Activated T-helper 1 cell treated with anti-CD3 and anti-CD28 coated beads, Interleukin-12 subunit alpha, Interleukin-12 subunit beta, Interleukin-2, Interleukin-4 antibody, amounts not matched to agents 30 ng/mL and 10 ng/mL and 1 ng/mL, durations not matched to agents 14 hours and 24 hours and 36 hours (primary cell): ENCODE measurements at regions of chr6 and their contacts with region 1.

Region 1: GRCh38 chr6:137218917-137219663 is at the start of gene IFNGR1:
- DNase-seq: peak; percentile 94
- H3K4me3 Mint-ChIP-seq: peak within 1 kb of the TSS; percentile 100
- H3K27ac Mint-ChIP-seq: peak within 1 kb of the TSS; percentile 100
- H3K4me1 Mint-ChIP-seq: peaks cover 56% of the 10 kb centered on the region
- H3K27me3 Mint-ChIP-seq: peaks cover 4% of the 10 kb centered on the region
- total RNA-seq, gene IFNGR1: 12.5 and 12.6 TPM in 2 replicates

Region 2: DNA sequence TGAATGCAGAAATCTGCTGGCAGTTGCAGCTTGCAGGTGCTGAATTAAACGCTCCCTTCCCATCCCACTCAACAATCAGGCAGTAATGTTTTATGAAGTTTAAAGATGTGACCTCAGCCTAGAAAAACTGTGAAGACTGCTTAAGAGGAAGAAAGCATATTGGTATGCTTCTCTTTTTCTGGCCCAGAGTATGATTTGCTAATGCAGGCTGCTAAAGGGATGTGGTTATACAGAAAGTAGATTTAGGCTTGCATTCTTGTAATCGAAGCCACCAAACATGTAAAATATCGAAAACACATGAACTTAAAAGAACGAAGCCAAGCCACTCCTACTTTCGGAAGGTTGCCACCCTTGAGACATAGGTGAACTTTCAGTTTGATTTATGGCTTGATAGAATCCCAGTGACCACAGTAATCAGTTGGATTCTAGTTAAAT is 467.6 kb before region 1 on chr6:
- intact Hi-C with region 1: loop called (anchors 5 kb)
- DNase-seq: peak; percentile 45
- H3K4me3 Mint-ChIP-seq: peak overlapping the region; percentile 75
- H3K27ac Mint-ChIP-seq: peak overlapping the region; percentile 87
- H3K4me1 Mint-ChIP-seq: peaks cover 92% of the 10 kb centered on the region
- H3K27me3 Mint-ChIP-seq: no peaks in the 10 kb centered on the region

Region 3: DNA sequence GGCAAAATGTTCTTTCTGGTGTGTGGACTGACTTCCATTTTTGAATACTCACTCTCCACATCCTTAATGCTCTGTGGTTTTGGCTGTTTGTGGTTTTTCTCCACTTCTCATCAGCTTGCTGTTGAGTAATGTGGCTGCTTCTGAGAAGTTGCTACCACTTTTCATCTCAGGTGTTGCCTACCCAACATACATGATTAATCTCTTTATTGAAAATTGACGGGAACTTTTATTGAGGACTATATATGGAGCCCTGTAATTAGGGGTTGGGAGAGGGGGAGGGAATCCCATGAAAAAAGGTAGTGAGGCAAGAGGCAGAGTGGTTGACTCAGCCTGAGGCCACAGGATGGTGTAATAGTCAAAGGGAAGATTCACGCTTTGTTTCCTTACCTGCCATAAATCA is 63.3 kb before region 1 on chr6:
- intact Hi-C with region 1: loop called (anchors 1 kb)
- DNase-seq: peak; percentile 63
- H3K4me3 Mint-ChIP-seq: peak overlapping the region; percentile 30
- H3K27ac Mint-ChIP-seq: peak overlapping the region; percentile 73
- H3K4me1 Mint-ChIP-seq: peaks cover 64% of the 10 kb centered on the region
- H3K27me3 Mint-ChIP-seq: peaks cover 9% of the 10 kb centered on the region

Region 4: DNA sequence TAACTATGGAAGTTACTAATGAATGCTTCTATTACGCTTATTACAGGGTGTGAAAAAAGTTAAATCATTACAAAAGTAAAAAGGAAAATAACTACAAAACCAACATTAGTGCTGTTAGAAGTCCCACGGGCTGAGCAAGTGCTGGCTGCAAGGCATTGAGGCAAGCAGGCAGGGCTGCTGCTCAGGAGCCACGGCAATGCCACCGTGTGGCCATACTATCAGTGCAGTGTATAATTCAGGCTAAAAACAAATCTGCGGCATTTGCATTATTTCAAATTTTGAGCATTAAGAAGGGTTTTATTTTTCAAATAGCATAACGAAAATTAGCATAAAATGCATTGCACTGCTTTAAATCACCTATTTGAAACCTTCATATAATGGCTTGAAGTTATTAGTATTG is 17.0 kb before region 1 on chr6:
- intact Hi-C with region 1: no loop called
- DNase-seq: no peak
- H3K4me3 Mint-ChIP-seq: no peak overlapping the region
- H3K27ac Mint-ChIP-seq: no peak overlapping the region
- H3K4me1 Mint-ChIP-seq: peaks cover 4% of the 10 kb centered on the region
- H3K27me3 Mint-ChIP-seq: no peaks in the 10 kb centered on the region

Region 5: GRCh38 chr6:137261393-137262160 is 42.5 kb after region 1 on chr6:
- intact Hi-C with region 1: loop called (anchors 5 kb)
- DNase-seq: no peak
- H3K4me3 Mint-ChIP-seq: no peak overlapping the region
- H3K27ac Mint-ChIP-seq: no peak overlapping the region
- H3K4me1 Mint-ChIP-seq: peaks cover 18% of the 10 kb centered on the region
- H3K27me3 Mint-ChIP-seq: peaks cover 23% of the 10 kb centered on the region

Region 6: GRCh38 chr6:137676888-137677287 is 457.8 kb after region 1 on chr6:
- intact Hi-C with region 1: loop called (anchors 5 kb)
- DNase-seq: no peak
- H3K4me3 Mint-ChIP-seq: peak overlapping the region; percentile 20
- H3K27ac Mint-ChIP-seq: peak overlapping the region; percentile 88
- H3K4me1 Mint-ChIP-seq: peaks cover 63% of the 10 kb centered on the region
- H3K27me3 Mint-ChIP-seq: peaks cover 3% of the 10 kb centered on the region

Region 7: GRCh38 chr6:138773177-138774091 is 1554.3 kb after region 1 on chr6 and contains the start of gene CCDC28A:
- intact Hi-C with region 1: loop called (anchors 10 kb)
- DNase-seq: peak; percentile 89
- H3K4me3 Mint-ChIP-seq: peak within 1 kb of the TSS; percentile 99
- H3K27ac Mint-ChIP-seq: peak within 1 kb of the TSS; percentile 100
- H3K4me1 Mint-ChIP-seq: peaks cover 23% of the 10 kb centered on the region
- H3K27me3 Mint-ChIP-seq: no peaks in the 10 kb centered on the region
- total RNA-seq, gene CCDC28A: 16.1 and 17.9 TPM in 2 replicates